ENCODE measurements at regions of chr2 and their contacts with region 1.

Region 1: DNA sequence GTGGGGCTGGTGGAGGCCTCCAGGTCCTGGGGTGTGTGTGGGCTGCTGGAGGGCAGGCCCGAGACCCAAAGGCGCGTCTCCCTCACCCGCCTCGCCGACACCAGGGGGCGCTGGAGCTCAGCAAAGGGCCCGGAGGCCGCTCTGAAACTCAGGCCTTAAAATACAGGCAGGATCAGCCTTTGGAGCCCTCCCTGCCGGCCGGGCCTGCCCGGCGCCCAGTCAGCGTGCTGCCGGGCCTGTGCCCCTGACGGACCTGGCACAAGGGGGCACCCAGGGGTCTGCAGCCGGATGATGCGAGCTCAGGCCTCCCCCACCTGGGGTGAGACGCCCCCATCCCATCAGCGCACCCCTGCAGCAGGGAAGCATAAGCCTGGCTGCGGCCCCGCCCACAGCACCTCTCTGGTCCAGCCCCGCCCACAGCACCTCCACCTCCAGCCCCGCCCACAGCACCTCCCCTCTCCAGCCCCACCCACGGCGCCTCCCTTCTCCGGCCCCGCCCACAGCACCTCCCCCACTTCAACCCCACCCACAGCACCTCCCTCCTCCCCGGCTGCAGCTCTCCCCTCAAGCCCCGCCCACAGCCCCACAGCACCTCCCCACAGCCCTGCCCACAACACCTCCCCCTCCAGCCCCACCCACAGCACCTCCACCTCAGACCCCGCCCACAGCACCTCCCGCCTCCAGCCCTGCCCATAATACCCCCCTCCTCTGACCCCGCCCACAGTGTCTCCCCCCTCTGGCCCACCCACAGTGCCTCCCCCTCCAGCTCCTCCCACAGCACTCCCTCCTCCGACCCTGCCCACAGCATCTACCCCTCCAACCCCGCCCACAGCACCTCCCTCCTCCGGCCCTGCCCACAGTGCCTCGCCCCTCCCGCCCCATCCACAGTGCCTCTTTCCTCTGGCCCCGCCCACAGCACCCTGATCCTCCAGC is 92.8 kb upstream of the OTOS start:
- DNase-seq: peak; percentile 88
- H3K4me3 ChIP-seq: peak overlapping the region in 1 of 3 donors; percentile 9
- H3K27ac ChIP-seq: no peak overlapping the region
- H3K4me1 ChIP-seq: peaks cover 3 to 19% of the 10 kb centered on the region in 2 donors
- H3K27me3 ChIP-seq: no peaks in the 10 kb centered on the region
- CTCF ChIP-seq: peak; percentile 81 to 94 (median 86)
- POLR2A ChIP-seq: no peak

Region 2: DNA sequence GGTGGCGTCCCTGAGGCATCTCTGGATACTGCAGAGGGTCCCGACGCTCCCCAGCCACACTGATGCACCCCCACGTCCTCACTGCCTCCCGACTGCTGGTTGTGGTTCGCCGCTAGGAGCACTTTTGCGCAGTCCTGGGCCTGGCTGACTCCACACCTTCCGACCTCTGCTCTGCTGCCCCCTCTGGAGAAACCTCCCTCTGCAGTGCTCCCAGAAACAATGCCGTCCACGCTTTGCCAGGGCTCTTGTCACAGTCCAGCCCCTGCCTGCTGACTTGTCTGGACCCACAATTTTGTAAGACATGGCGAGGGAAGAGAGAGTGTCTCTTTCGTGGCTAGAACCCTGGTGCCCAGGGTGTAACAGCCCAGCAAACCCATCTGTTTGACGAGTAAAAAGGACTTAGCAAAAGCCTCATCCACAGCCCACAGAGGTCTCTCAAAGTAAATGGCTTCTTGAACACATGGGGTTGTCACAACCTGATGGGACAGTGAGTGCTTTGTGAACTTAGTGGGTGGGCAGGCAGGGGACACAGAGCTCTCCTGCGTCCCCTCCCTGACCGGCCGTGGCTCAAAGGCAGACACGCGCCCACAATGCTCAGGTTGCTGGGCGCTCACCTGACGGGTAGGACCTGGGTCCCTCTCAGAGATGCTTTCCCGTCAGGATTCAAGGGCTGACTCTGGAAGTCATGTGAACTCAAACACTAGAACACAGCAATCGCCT is 101.1 kb before region 1 on chr2:
- intact Hi-C with region 1: no loop called
- DNase-seq: no peak
- H3K4me3 ChIP-seq: no peak overlapping the region
- H3K27ac ChIP-seq: no peak overlapping the region
- H3K4me1 ChIP-seq: peaks cover 11 to 19% of the 10 kb centered on the region in 2 donors
- H3K27me3 ChIP-seq: no peaks in the 10 kb centered on the region
- CTCF ChIP-seq: no peak
- POLR2A ChIP-seq: no peak

Region 3: DNA sequence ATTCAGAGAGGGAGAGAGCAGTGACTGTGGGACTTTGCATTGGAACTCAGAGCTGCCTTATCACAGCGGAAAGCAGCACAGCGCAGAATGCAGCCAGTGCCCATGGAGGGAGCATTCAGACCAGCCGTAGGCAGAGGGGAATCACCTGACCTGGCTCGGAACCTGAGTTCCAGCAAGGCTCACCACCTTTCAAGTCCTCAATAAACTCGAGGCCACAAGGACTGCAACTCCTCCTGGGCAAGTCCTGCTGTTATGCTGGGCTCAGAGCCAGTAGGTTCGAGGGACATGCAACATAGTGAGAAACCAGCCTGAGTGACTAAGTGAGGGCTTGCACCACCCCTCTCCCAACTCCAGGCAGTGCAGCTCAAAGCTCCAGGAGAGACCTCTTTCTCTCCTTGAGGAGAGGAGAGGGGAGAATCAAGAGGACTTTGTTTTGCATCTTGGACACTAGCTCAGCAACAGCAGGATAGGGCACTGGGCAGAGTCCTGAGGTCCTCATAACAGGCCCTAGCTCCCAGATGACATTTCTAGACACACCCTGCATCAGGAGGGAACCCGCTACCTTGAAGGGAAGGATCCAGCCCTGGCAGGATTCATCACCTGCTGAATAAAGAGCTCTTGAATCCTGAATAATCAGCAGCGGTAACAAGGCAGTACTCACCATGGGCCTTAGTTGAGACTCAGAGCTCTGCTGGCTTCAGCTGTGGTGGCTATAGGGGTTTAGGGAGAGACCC is 44.0 kb after region 1 on chr2:
- intact Hi-C with region 1: no loop called
- DNase-seq: peak; percentile 94
- H3K4me3 ChIP-seq: no peak overlapping the region
- H3K27ac ChIP-seq: peak overlapping the region in 2 of 3 donors; percentile 36 to 37
- H3K4me1 ChIP-seq: peaks cover 16 to 17% of the 10 kb centered on the region in 2 donors
- H3K27me3 ChIP-seq: no peaks in the 10 kb centered on the region
- CTCF ChIP-seq: peak in 2 of 6 experiments; percentile 11 to 19
- POLR2A ChIP-seq: peak in 1 of 2 donors; percentile 17

Region 4: GRCh38 chr2:240437861-240438809 is 204.9 kb after region 1 on chr2:
- intact Hi-C with region 1: loop called (anchors 2 kb)
- DNase-seq: peak; percentile 72 to 76
- H3K4me3 ChIP-seq: no peak overlapping the region
- H3K27ac ChIP-seq: no peak overlapping the region
- H3K4me1 ChIP-seq: peaks cover 18 to 33% of the 10 kb centered on the region in 2 donors
- H3K27me3 ChIP-seq: no peaks in the 10 kb centered on the region
- CTCF ChIP-seq: peak; percentile 77 to 97 (median 92)
- POLR2A ChIP-seq: no peak

Region 5: DNA sequence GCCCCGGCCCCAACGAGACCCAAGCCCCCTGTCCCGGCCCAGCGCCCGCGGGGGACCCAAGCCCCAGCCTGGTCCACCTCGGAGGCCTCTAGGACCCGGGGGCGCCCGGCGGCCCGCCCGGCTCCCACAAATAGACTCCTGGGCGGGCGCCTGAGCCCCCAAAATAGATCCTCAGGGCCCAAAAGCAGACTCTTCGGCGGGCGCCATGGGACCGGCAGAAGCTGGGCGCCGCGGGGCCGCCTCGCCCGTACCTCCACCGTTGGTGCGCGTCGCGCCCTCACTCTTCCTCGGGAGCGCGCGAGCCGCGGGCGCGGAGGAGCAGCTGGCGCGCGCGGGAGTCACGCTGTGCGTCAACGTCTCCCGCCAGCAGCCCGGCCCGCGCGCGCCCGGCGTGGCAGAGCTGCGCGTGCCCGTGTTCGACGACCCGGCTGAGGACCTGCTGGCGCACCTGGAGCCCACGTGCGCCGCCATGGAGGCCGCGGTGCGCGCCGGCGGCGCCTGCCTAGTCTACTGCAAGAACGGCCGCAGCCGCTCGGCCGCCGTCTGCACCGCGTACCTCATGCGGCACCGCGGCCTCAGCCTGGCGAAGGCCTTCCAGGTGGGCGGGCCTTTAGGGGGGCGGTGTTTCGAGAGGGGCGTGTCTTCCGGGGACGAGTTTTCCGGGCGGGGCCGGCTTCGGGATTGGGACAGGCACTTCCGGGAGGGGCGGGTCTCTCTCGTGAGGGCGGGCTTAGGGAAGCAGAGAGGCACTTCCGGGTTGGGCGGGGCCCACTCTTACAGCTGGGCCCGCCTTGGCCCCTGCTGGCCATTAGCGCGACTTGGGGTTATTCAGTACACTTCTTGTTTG is 327.5 kb after region 1 on chr2:
- intact Hi-C with region 1: loop called (anchors 10 kb)
- DNase-seq: peak; percentile 99 to 100
- H3K4me3 ChIP-seq: peak overlapping the region; percentile 60 to 97 (median 96)
- H3K27ac ChIP-seq: peak overlapping the region; percentile 95 to 100 (median 99)
- H3K4me1 ChIP-seq: peaks cover 30 to 45% of the 10 kb centered on the region in 2 donors
- H3K27me3 ChIP-seq: no peaks in the 10 kb centered on the region
- CTCF ChIP-seq: peak in 3 of 6 experiments; percentile 30 to 54 (median 30)
- POLR2A ChIP-seq: peak in 1 of 2 donors; percentile 95

Measured in thyroid gland (tissue), 4 donors.